Left cardiac atrium (tissue), 4 donors: ENCODE measurements at regions of chr3 and their contacts with region 1.

Region 1: DNA sequence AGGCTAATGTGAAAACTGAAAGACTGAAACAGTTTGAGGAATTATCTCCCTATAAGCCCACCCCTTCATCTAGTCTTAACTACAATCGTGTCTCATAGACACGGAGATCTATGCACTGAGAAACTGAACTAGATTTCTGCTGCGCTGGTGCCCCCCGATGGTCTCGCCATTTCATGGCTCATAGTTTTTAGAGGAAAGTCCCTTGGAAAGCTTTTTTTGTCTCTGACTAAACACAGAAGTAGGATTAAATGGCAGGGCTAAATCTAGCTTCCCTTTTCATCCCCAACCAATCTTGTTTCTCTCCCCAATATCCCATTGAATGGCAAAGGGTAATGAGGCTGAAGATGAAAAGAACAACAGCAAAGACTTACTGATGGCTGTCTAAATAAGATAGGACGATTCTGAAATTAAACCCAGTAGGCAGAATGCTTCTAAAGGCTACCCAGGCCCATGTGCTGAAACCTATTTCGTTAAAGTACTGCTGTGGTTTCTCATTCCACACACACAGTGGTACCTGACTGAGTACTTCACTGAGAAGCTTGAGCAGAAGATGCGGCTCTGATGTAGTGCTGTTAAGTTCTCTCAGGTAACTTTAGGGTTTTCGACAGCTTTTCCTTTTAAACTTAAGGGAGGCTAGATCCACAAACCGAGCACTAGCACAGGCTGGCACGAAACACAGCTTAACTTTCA is 142.7 kb downstream of the GADL1 start:
- DNase-seq: peak; percentile 43
- ATAC-seq: no peak

Region 2: GRCh38 chr3:30042274-30042859 is 709.4 kb before region 1 on chr3:
- intact Hi-C with region 1: loop called in 1 of 2 experiments (anchors 5 kb)
- DNase-seq: peak; percentile 63
- ATAC-seq: peak; percentile 70 to 75

Region 3: GRCh38 chr3:30112902-30113484 is 638.8 kb before region 1 on chr3:
- intact Hi-C with region 1: loop called in 1 of 2 experiments (anchors 10 kb)
- DNase-seq: no peak
- ATAC-seq: peak; percentile 44 to 59

Region 4: GRCh38 chr3:31067009-31067408 is 315.3 kb after region 1 on chr3:
- intact Hi-C with region 1: no loop called
- DNase-seq: no peak
- ATAC-seq: peak; percentile 34 to 84